K562 (cell line): ENCODE measurements at regions of chr12 and their contacts with region 1.

Region 1: DNA sequence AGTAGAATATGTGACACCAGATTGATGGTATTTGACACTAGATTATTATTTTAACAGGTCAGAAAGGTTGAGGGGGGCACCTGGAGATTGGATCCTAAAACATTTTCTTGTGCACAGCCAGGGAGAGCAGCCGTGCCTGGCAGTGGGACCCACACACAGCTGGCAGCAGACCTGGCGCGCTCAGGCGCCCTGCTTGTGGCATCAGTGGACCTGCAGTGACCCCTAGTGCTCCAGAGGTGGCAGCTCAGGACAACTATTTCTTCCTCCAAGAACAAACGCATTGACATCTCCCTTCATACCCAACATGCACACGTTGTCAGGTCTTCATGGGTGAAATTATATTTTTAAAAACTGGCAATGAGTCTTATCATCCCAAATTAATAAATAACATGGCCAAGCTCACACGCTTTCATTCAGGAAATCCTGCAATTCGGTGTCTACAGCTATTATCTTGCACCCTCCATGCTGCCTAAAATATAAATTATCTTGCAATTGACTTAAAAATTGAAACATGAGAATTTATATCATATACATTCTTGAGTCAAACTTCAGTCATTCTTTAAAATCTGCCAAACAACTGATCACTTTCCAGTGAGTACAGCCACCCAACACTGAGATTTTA is 7.7 kb upstream of the TMEM132D start:
- DNase-seq: peak; percentile 47 to 67 (median 64)
- ATAC-seq: peak; percentile 89
- H3K4me3 ChIP-seq: no peak overlapping the region
- H3K27ac ChIP-seq: no peak overlapping the region
- H3K4me1 ChIP-seq: no peaks in the 10 kb centered on the region
- H3K27me3 ChIP-seq: peaks cover 2 to 12% of the 10 kb centered on the region in 2 experiments; a peak in 3 of 5 replicates
- CTCF ChIP-seq: peak; percentile 70 to 85 (median 85)
- EP300 ChIP-seq: no peak
- POLR2A ChIP-seq: no peak
- RAD21 ChIP-seq: peak; percentile 84 to 86

Region 2: GRCh38 chr12:128644664-128645296 is 1266.8 kb before region 1 on chr12:
- CTCF ChIA-PET with region 1: interaction called, 3 read pairs
- POLR2A ChIA-PET with region 1: no interaction called
- in situ Hi-C with region 1: no loop called
- intact Hi-C with region 1: loop called (anchors 1 kb)
- DNase-seq: peak; percentile 40 to 61 (median 54)
- ATAC-seq: peak; percentile 69
- H3K4me3 ChIP-seq: no peak overlapping the region
- H3K27ac ChIP-seq: no peak overlapping the region
- H3K4me1 ChIP-seq: no peaks in the 10 kb centered on the region
- H3K27me3 ChIP-seq: no peaks in the 10 kb centered on the region; a peak in 1 of 5 replicates
- CTCF ChIP-seq: peak; percentile 66 to 79 (median 67)
- EP300 ChIP-seq: no peak
- POLR2A ChIP-seq: no peak
- RAD21 ChIP-seq: peak; percentile 7 to 47; a peak in 2 of 4 replicates

Region 3: GRCh38 chr12:128783129-128783574 is 1128.4 kb before region 1 on chr12:
- CTCF ChIA-PET with region 1: no interaction called
- POLR2A ChIA-PET with region 1: no interaction called
- in situ Hi-C with region 1: loop called (anchors 25 kb)
- intact Hi-C with region 1: loop called (anchors 2 kb)
- DNase-seq: no peak
- ATAC-seq: peak; percentile 48
- H3K4me3 ChIP-seq: no peak overlapping the region
- H3K27ac ChIP-seq: no peak overlapping the region
- H3K4me1 ChIP-seq: no peaks in the 10 kb centered on the region
- H3K27me3 ChIP-seq: peaks cover 16 to 55% of the 10 kb centered on the region in 2 experiments; a peak in 4 of 5 replicates
- CTCF ChIP-seq: no peak
- EP300 ChIP-seq: no peak
- POLR2A ChIP-seq: no peak
- RAD21 ChIP-seq: no peak

Region 4: DNA sequence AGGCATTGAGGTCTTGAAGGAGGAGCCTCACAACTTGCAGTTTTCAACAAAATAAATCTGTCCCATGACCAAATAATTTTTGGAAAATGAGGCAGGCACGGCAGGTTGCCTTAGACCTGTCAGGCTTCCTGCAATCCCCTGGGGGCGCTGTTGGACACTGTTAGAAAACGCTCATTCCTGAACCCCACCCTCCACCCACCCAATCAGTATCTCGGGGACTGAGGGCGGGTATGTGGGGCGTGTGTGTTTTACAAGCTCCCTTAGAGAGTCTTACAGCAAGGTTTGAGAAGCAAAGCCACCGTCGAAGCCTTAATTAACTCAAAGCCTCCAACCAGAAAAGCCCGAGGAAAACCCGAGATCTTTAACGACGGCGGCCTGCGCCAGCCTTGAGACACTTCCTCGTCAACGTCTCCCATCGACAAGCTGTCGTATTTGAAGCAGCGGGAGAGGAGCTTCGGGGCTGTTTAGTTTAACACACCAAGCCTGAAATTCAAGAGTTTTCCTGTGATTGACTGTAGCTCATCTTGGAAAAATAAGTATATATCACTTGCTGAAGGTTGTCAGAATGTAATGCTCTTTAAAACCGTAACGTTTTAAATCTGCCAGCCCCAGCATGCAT is 935.3 kb before region 1 on chr12:
- CTCF ChIA-PET with region 1: no interaction called
- POLR2A ChIA-PET with region 1: no interaction called
- in situ Hi-C with region 1: no loop called
- intact Hi-C with region 1: loop called (anchors 2 kb)
- DNase-seq: peak; percentile 60 to 70 (median 66)
- ATAC-seq: peak; percentile 93
- H3K4me3 ChIP-seq: no peak overlapping the region
- H3K27ac ChIP-seq: no peak overlapping the region
- H3K4me1 ChIP-seq: no peaks in the 10 kb centered on the region; a peak in 1 of 5 replicates
- H3K27me3 ChIP-seq: peaks cover 21 to 81% of the 10 kb centered on the region in 2 experiments
- CTCF ChIP-seq: peak; percentile 64 to 68 (median 65)
- EP300 ChIP-seq: no peak
- POLR2A ChIP-seq: no peak
- RAD21 ChIP-seq: peak in 1 of 2 experiments; percentile 37; a peak in 1 of 4 replicates

Region 5: GRCh38 chr12:129193263-129193871 is 718.2 kb before region 1 on chr12:
- CTCF ChIA-PET with region 1: interaction called, 3 read pairs
- POLR2A ChIA-PET with region 1: no interaction called
- in situ Hi-C with region 1: loop called (anchors 25 kb)
- intact Hi-C with region 1: loop called (anchors 2 kb)
- DNase-seq: peak; percentile 57 to 75 (median 66)
- ATAC-seq: peak; percentile 54; the same call in 1 of the 3 replicates
- H3K4me3 ChIP-seq: no peak overlapping the region
- H3K27ac ChIP-seq: no peak overlapping the region
- H3K4me1 ChIP-seq: no peaks in the 10 kb centered on the region
- H3K27me3 ChIP-seq: no peaks in the 10 kb centered on the region
- CTCF ChIP-seq: peak; percentile 53 to 83 (median 61); a peak in 5 of 6 replicates
- EP300 ChIP-seq: no peak
- POLR2A ChIP-seq: no peak
- RAD21 ChIP-seq: peak in 1 of 2 experiments; percentile 67; a peak in 3 of 4 replicates

Region 6: GRCh38 chr12:129483111-129483893 is 428.2 kb before region 1 on chr12:
- CTCF ChIA-PET with region 1: no interaction called
- POLR2A ChIA-PET with region 1: no interaction called
- in situ Hi-C with region 1: no loop called
- intact Hi-C with region 1: no loop called
- DNase-seq: no peak
- ATAC-seq: no peak
- H3K4me3 ChIP-seq: no peak overlapping the region
- H3K27ac ChIP-seq: no peak overlapping the region
- H3K4me1 ChIP-seq: no peaks in the 10 kb centered on the region
- H3K27me3 ChIP-seq: peaks cover 0 to 11% of the 10 kb centered on the region in 2 experiments; a peak in 1 of 5 replicates
- CTCF ChIP-seq: no peak
- EP300 ChIP-seq: no peak
- POLR2A ChIP-seq: no peak
- RAD21 ChIP-seq: no peak

Region 7: DNA sequence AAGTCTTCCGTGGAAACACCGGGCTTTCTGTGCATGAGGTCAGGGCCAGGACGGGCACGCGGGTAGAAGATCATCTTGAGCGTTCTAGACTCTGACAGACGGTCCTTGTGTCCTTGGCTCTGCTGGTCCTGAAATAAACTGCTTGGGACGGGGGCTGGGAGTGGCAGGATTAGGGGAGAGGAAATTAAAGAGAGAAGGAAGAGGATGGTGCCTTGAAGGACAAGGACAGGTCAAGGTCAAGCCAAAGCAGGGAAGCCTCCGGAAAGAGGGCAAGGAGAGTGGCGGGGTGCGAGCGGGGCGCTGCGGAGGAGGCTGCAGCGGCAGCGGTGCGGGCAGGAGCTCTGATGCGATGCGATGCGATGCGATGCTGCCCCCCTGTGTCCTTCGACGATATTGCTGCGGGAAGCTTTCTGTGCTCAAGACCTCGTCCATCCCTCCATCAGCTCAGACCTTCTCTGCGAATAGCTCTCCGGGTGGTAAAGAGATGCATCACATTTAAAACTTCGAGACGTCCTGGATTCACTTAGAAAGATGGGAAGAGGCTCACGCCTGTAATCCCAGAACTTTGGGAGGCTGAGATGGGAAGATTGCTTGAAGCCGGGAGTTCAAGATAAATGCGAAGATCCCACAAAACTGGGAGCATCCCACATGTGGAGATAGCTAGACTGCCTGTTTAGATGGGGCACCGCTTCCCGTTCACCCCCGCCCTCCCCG is 102.4 kb after region 1 on chr12:
- CTCF ChIA-PET with region 1: no interaction called
- POLR2A ChIA-PET with region 1: interaction called, 3 read pairs
- in situ Hi-C with region 1: no loop called
- intact Hi-C with region 1: loop called (anchors 5 kb)
- DNase-seq: peak; percentile 70 to 76 (median 72)
- ATAC-seq: peak; percentile 98
- H3K4me3 ChIP-seq: no peak overlapping the region
- H3K27ac ChIP-seq: no peak overlapping the region
- H3K4me1 ChIP-seq: no peaks in the 10 kb centered on the region
- H3K27me3 ChIP-seq: peaks cover 20 to 60% of the 10 kb centered on the region in 2 experiments; a peak in 4 of 5 replicates
- CTCF ChIP-seq: peak; percentile 70 to 78 (median 70); a peak in 5 of 6 replicates
- EP300 ChIP-seq: no peak
- POLR2A ChIP-seq: no peak
- RAD21 ChIP-seq: peak; percentile 38 to 73